ENCODE measurements at regions of chr3 and their contacts with region 1.

Region 1: GRCh38 chr3:141913150-141913811 is 36.8 kb downstream of the ATP1B3 start:
- DNase-seq: no peak
- H3K4me3 ChIP-seq: no peak overlapping the region
- CTCF ChIP-seq: peak; percentile 55

Region 2: GRCh38 chr3:141575879-141576743 is 337.2 kb before region 1 on chr3:
- CTCF ChIA-PET with region 1: interaction called, 29 read pairs
- POLR2A ChIA-PET with region 1: no interaction called
- DNase-seq: no peak
- H3K4me3 ChIP-seq: no peak overlapping the region
- CTCF ChIP-seq: peak; percentile 51

Region 3: GRCh38 chr3:141738022-141738890 is 175.0 kb before region 1 on chr3 and contains the start of gene RNF7:
- CTCF ChIA-PET with region 1: interaction called, 10 read pairs
- POLR2A ChIA-PET with region 1: interaction called, 3 read pairs
- DNase-seq: peak; percentile 49
- H3K4me3 ChIP-seq: peak within 1 kb of the TSS; percentile 98
- CTCF ChIP-seq: peak; percentile 79

Region 4: DNA sequence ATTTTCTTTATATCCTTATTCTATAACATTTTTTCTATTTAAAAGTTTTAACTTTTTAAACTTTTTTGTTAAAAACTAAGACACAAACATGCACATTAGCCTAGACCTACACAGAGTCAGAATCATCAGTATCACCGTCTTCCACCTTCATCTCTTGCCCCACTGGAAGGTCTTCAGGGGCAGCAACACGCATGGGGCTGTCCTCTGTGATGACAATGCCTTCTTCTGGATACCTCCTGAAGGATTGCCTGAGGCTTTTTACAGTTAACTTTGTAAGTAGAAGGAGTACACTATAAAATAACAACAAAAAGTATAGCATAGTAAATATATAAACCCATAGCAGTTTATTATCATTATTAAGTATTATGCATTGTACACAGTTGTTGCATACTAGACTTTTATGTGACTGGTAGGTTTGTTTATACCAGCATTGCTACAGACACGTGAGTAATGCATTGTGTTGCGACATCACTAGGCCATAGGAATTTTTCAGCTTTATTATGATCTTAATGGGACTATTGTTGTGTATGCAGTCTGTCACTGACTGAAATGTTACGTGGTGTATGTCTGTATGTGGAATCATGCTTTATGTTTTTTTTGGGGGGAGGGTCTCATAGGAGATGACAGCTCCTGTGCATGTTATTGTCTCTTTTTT is 18.6 kb before region 1 on chr3:
- CTCF ChIA-PET with region 1: interaction called, 26 read pairs
- POLR2A ChIA-PET with region 1: no interaction called
- DNase-seq: peak; percentile 37
- H3K4me3 ChIP-seq: no peak overlapping the region
- CTCF ChIP-seq: no peak

Region 5: GRCh38 chr3:141926929-141927328 is 13.6 kb after region 1 on chr3:
- CTCF ChIA-PET with region 1: interaction called, 28 read pairs
- POLR2A ChIA-PET with region 1: no interaction called
- DNase-seq: no peak
- H3K4me3 ChIP-seq: no peak overlapping the region
- CTCF ChIP-seq: no peak

Region 6: GRCh38 chr3:141940204-141940776 is 27.0 kb after region 1 on chr3:
- CTCF ChIA-PET with region 1: interaction called, 10 read pairs
- POLR2A ChIA-PET with region 1: no interaction called
- DNase-seq: no peak
- H3K4me3 ChIP-seq: no peak overlapping the region
- CTCF ChIP-seq: no peak

Measured in AG04449 (cell line).